ENCODE measurements at regions of chr16 and their contacts with region 1.

Region 1: DNA sequence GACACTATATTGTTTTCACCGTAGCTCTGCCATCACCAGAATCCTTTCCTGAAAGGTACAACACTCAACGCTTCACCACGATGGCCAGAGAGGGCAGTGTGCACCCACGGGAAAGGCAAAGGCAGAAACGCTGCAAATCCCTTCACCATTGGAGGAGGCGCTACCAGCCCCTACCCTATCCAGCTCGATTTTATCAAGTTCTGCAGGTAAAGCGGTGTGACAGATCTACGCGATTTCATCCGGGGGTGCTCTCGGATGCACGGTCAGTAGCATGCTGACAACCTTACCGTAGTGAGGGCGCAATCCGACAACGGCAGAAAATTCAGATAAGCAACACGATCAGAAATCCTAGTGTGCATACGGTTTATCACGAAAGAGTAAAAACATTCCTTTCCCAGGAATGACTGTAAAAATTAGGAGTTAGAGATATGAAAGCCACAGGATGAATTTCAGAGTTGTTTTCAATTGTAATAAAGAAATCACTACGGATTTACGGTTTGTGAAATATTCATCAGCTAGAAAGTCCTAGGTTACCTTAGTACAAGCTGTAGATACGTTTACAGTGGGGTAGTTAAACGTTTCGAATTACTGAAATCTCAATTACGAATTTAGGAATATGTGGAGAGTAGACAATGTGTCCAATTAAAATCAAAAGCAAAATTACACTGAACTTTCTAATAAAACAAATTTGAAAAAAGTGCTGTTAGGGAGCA is 1.8 kb downstream of the NETO2 start:
- DNase-seq: peak; percentile 91

Region 2: DNA sequence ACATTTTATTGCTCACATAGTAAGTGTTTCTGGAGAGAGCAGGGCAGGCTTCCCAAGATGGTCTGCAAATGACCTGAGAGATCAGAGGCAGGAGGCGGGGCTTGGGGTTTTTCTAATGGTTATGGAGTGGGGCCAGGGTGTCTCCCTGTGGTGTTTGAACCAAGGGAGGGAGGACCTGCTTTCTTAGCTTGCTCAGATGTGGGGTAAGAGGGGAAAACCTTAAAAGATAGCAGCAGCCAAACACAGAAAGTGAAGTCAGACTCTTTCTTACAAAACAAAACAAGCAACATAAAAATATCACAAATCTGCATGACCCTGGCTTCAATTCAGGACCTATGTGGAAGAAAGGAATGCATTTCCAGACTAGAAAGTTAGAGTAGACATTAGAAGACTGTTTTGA is 145.5 kb before region 1 on chr16:
- intact Hi-C with region 1: no loop called
- DNase-seq: no peak

Region 3: GRCh38 chr16:47037746-47038458 is 104.0 kb before region 1 on chr16:
- intact Hi-C with region 1: loop called (anchors 5 kb)
- DNase-seq: peak; percentile 96

Region 4: DNA sequence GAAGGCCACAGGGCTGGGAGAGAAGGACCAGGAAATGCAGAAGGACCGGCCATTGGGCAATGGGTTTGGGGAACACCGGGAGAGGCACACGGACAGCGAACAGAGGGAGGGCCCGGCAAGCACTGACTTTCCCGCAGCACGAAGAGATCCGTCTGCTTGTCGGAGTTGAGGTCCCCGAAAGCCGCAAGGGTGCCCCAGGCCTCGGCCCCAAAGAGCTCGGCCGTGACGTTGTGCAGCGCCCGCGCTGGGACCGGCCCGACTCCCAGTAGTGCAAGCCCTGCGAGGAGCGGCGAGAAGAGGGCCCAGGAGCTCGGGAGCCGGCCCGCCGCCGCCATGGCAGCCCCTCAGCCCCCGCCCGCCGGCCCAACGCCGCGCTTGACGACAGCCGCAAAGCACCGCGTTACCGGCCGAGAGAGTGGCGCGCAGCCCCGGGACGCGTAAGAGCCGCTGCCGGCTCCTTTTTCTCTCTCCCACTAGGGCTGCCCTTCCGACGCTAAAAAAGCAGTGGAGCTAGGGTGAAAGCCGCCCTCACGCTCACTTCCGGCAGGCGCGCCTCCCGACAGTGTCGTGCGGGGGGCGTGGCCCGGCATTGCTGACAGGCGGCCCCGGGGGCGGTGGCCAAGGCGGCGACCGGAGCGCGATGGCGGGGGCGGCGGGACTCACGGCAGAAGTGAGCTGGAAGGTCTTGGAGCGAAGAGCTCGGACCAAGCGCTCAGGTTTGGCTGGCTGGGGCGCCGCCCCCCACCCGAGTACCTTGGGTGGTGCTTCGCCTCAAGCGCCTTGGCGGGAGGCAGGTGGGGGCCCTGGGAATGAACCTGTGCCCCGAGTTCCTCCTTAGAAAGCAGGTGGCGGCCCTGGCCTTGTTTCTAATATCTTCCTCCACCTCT is 319.0 kb after region 1 on chr16 and contains the starts of genes ITFG1 and PHKB:
- intact Hi-C with region 1: loop called (anchors 10 kb)
- DNase-seq: peak; percentile 97
- total RNA-seq, gene ITFG1: 69.6 TPM
- total RNA-seq, gene PHKB: 53.3 TPM

Region 5: GRCh38 chr16:48054881-48055601 is 913.1 kb after region 1 on chr16:
- intact Hi-C with region 1: loop called (anchors 5 kb)
- DNase-seq: no peak

Region 6: GRCh38 chr16:48156790-48157209 is 1014.9 kb after region 1 on chr16:
- intact Hi-C with region 1: loop called (anchors 5 kb)
- DNase-seq: peak; percentile 91